PC-9 (cell line): ENCODE measurements at regions of chr10 and their contacts with region 1.

Region 1: GRCh38 chr10:43204943-43205671 is 61.8 kb downstream of the RASGEF1A start:
- DNase-seq: peak; percentile 50 to 66
- H3K4me3 ChIP-seq: no peak overlapping the region
- H3K27ac ChIP-seq: no peak overlapping the region
- H3K4me1 ChIP-seq: no peaks in the 10 kb centered on the region
- H3K27me3 ChIP-seq: no peaks in the 10 kb centered on the region
- CTCF ChIP-seq: peak; percentile 91

Region 2: DNA sequence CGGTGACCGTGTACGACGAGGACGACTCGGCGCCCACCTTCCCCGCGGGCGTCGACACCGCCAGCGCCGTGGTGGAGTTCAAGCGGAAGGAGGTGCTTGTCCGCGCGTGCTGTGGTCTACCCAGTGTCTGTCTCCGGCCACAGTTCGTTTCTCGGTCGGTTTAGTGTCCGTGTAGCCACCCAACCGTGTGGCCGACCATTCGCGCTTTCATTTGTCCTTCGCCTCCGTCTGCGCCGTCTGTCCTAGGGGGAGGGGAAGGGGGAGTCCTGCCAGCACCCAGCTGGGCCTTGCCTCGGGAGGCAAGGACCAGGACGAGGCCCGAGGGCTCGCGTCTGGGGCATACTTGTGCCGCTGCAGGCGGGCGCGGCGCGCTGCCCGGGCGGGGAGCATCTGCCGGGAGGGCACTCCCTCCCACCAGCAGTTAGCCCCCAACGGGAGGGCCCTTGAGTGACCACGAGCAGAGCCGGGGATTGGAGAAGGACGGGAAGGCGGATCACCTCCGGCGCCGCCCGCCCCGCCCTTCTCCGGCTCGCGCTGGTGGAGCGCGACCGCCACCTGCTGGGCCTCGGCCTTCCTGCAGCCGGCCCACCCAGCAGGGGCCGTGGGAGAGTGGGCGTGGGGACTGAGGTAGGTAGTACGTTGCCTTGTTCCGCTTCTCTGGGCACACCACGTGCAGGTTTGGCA is 99.9 kb before region 1 on chr10:
- CTCF ChIA-PET with region 1: no interaction called
- POLR2A ChIA-PET with region 1: no interaction called
- intact Hi-C with region 1: loop called (anchors 10 kb)
- DNase-seq: peak in 1 of 2 experiments; percentile 79
- H3K4me3 ChIP-seq: peak overlapping the region; percentile 53; the same call in 1 of the 2 replicates
- H3K27ac ChIP-seq: no peak overlapping the region
- H3K4me1 ChIP-seq: 0 out of 2 replicates have a peak, but pooled peaks cover 4% of the 10 kb centered on the region
- H3K27me3 ChIP-seq: peaks cover 7% of the 10 kb centered on the region; the same call in 1 of the 2 replicates
- CTCF ChIP-seq: peak; percentile 99

Region 3: DNA sequence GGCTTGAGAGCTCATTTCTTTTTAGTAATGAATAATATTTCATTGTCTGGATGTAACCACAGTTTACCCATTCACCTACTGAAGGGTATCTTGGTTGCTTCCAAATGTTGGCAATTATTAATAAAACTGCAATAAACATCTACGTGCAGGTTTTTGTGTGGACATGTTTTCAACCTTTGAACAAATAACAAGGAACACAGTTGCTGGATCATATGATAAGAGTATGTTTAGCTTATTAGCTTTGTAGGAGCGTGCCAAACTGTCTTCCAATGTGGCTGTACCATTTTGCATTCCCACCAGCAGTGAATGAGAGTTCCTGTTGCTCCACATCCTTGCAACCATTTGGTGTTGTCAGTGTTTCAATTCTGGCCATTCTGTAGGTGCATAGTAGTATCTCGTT is 17.9 kb before region 1 on chr10:
- CTCF ChIA-PET with region 1: interaction called, 10 read pairs
- POLR2A ChIA-PET with region 1: no interaction called
- intact Hi-C with region 1: no loop called
- DNase-seq: no peak
- H3K4me3 ChIP-seq: no peak overlapping the region
- H3K27ac ChIP-seq: no peak overlapping the region
- H3K4me1 ChIP-seq: no peaks in the 10 kb centered on the region
- H3K27me3 ChIP-seq: no peaks in the 10 kb centered on the region
- CTCF ChIP-seq: no peak